Activated CD4-positive, alpha-beta T cell treated with anti-CD3 and anti-CD28 coated beads for 36 hours (primary cell): ENCODE measurements at regions of chr19 and their contacts with region 1.

Region 1: GRCh38 chr19:57632987-57633831 is at the start of gene ZNF211:
- DNase-seq: peak; percentile 91
- ATAC-seq: peak; percentile 100
- H3K4me3 Mint-ChIP-seq: peak within 1 kb of the TSS; percentile 96
- H3K27ac Mint-ChIP-seq: peak within 1 kb of the TSS; percentile 86
- H3K4me1 Mint-ChIP-seq: peaks cover 19% of the 10 kb centered on the region
- H3K27me3 Mint-ChIP-seq: no peaks in the 10 kb centered on the region
- total RNA-seq, gene ZNF211: 8.9 to 9.5 TPM

Region 2: DNA sequence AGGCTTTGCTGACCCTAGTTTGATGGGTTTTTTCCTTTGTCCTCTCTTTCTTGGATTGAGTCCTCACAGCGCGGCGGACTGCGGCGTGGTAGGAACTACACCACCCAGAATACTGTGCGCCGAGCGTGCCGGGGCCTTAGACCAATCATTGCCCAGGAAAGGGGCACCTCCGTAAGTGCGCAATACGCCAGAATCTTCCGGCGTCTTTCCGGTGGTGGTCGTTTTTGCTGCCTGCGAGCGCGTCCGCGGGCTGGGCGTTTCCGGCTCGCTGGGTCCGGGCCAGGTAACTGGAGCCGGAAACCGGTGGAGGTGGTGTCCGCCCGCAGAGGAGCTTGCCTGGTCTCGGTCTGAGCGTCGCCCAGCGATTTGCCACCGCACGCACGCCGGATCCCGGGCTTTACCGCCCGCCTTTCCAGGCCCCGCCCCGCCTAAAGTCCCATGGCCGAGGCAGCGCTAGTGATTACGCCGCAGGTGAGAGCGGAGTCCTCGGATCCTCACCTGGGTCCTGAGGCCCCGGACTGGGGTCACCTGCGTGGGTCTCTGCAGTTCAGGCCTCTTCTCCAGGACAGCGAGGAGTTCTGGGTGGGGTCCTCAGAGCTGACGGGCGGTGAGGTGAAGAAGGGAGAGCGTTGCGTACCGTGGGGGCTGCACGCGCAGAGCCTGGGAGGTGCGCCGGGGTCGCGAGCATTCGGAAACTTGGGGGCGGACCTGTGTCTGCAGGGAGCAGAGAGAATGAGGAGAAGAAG is 105.9 kb before region 1 on chr19 and contains the start of gene ZNF549:
- CTCF ChIA-PET with region 1: no interaction called
- POLR2A ChIA-PET with region 1: no interaction called
- intact Hi-C with region 1: loop called in 1 of 2 experiments (anchors 1 kb)
- DNase-seq: peak; percentile 93
- ATAC-seq: peak; percentile 100
- H3K4me3 Mint-ChIP-seq: peak within 1 kb of the TSS; percentile 82
- H3K27ac Mint-ChIP-seq: peak within 1 kb of the TSS; percentile 84
- H3K4me1 Mint-ChIP-seq: peaks cover 18% of the 10 kb centered on the region
- H3K27me3 Mint-ChIP-seq: no peaks in the 10 kb centered on the region
- total RNA-seq, gene ZNF549: 3.7 to 4.6 TPM

Region 3: GRCh38 chr19:57599761-57600383 is 33.3 kb before region 1 on chr19 and contains the start of gene ZNF530:
- CTCF ChIA-PET with region 1: no interaction called
- POLR2A ChIA-PET with region 1: no interaction called
- intact Hi-C with region 1: loop called in 1 of 2 experiments (anchors 1 kb)
- DNase-seq: peak; percentile 95
- ATAC-seq: peak; percentile 98
- H3K4me3 Mint-ChIP-seq: peak within 1 kb of the TSS; percentile 81
- H3K27ac Mint-ChIP-seq: peak within 1 kb of the TSS; percentile 79
- H3K4me1 Mint-ChIP-seq: peaks cover 12% of the 10 kb centered on the region
- H3K27me3 Mint-ChIP-seq: no peaks in the 10 kb centered on the region
- total RNA-seq, gene ZNF530: 7.1 to 7.2 TPM

Region 4: DNA sequence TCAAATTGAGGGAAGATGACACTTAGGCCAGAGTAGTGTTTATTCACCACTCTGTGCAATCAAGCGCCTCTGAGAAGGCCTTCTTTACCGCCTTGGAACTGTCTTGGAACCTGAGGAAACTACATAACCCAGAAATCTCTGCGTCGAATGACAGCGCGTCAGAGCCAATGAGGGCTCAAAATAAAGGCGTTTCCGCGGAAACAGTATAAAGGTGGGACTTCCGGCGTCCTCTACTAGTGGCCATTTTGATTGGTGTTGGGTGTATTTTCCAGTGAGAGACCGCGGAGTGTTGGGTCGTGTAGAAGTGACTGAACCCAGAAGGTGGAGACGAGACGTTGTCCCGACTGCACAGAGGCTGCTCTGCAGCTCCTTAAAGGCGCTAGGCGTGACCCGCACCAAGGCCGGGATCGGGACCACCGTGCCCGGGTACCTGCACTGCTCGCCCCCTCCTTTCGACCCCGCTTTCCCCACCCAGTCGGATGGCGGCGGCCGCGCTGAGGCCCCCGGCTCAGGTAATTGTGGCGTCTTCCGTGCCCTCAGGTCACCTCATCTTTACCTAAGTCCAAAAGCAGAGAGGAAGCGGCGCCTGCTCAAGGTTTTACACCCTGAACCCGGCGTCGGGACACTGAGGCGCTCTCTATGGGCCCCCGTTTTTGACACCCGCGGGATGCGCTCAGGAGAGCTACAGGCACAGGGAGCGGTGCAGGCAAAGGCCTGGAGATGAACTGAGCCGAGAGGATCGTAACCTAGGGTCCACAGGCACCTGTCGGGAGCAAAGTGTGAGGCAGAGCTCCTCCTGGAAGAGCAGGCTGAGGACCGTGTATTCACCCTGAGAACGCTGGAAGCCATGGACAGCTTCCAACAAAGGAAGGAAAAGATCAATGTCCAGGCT is 113.6 kb after region 1 on chr19 and contains the start of gene ZNF776:
- CTCF ChIA-PET with region 1: no interaction called
- POLR2A ChIA-PET with region 1: interaction called, 4 read pairs
- intact Hi-C with region 1: loop called in 1 of 2 experiments (anchors 1 kb)
- DNase-seq: peak; percentile 89
- ATAC-seq: peak; percentile 98
- H3K4me3 Mint-ChIP-seq: peak within 1 kb of the TSS; percentile 93
- H3K27ac Mint-ChIP-seq: peak within 1 kb of the TSS; percentile 98
- H3K4me1 Mint-ChIP-seq: peaks cover 15% of the 10 kb centered on the region
- H3K27me3 Mint-ChIP-seq: no peaks in the 10 kb centered on the region
- total RNA-seq, gene ZNF776: 8.9 to 14.7 TPM

Region 5: DNA sequence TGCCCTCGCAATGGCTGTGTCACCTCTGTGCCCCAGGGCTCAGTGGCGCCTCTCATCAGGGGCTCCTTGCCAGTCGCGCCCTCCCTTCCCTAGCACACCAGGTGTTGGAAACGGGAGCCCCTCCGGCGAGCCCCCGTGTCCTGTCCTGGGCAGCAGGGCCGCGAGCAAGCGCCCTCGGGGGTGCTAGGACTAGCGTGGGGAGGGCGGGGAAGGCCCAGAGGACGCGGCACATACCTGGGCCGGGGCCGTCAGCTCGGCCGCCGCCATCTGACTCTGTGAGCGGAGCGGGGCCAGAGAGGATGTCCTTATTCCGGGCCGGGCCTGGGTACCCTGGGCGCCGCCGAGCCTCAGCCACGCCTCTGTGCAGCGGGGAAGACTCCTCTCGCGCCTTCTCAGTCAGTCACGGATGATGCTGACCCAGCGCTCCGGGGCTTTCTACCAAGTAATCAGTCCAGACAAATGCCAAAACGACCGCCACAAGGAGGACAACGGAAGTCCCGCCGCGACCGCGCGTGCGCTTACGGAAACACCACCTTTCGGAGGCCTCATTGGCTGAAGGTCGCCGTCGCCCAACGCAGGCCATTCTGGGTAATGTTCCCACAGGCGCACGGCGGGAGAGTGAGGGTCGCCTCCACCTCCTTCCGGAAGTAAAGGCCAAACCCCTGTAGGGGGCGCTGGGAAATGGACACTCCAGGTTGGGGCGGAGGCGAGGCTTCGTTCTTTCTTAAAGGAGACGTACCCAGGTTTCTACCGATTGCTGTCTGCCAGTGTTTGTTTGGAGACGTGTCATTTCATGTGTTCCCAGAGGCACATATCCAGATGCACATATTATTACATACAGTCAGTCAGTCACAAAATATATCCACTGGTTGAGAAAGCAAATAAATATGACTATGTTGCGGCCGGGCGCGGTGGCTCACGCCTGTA is 314.3 kb after region 1 on chr19 and contains the start of gene ZNF256:
- CTCF ChIA-PET with region 1: no interaction called
- POLR2A ChIA-PET with region 1: no interaction called
- intact Hi-C with region 1: loop called in 1 of 2 experiments (anchors 1 kb)
- DNase-seq: peak; percentile 95
- ATAC-seq: peak; percentile 99
- H3K4me3 Mint-ChIP-seq: peak within 1 kb of the TSS; percentile 87
- H3K27ac Mint-ChIP-seq: peak within 1 kb of the TSS; percentile 90
- H3K4me1 Mint-ChIP-seq: peaks cover 16% of the 10 kb centered on the region
- H3K27me3 Mint-ChIP-seq: no peaks in the 10 kb centered on the region
- total RNA-seq, gene ZNF256: 6.3 to 6.9 TPM